ENCODE measurements at regions of chr6 and their contacts with region 1.

Region 1: GRCh38 chr6:46781478-46782378 is 11.5 kb upstream of the MEP1A start:
- DNase-seq: peak; percentile 34 to 58
- H3K4me3 ChIP-seq: no peak overlapping the region
- H3K27ac ChIP-seq: no peak overlapping the region
- H3K4me1 ChIP-seq: no peaks in the 10 kb centered on the region
- H3K27me3 ChIP-seq: no peaks in the 10 kb centered on the region
- CTCF ChIP-seq: peak; percentile 89

Region 2: GRCh38 chr6:45854149-45854742 is 927.5 kb before region 1 on chr6:
- CTCF ChIA-PET with region 1: no interaction called
- POLR2A ChIA-PET with region 1: no interaction called
- intact Hi-C with region 1: no loop called
- DNase-seq: no peak
- H3K4me3 ChIP-seq: no peak overlapping the region
- H3K27ac ChIP-seq: no peak overlapping the region
- H3K4me1 ChIP-seq: no peaks in the 10 kb centered on the region
- H3K27me3 ChIP-seq: no peaks in the 10 kb centered on the region
- CTCF ChIP-seq: no peak

Region 3: GRCh38 chr6:46410334-46410953 is 371.3 kb before region 1 on chr6:
- CTCF ChIA-PET with region 1: interaction called, 12 read pairs
- POLR2A ChIA-PET with region 1: no interaction called
- intact Hi-C with region 1: no loop called
- DNase-seq: peak in 1 of 2 experiments; percentile 23
- H3K4me3 ChIP-seq: no peak overlapping the region
- H3K27ac ChIP-seq: no peak overlapping the region
- H3K4me1 ChIP-seq: no peaks in the 10 kb centered on the region
- H3K27me3 ChIP-seq: no peaks in the 10 kb centered on the region
- CTCF ChIP-seq: peak; percentile 91

Region 4: DNA sequence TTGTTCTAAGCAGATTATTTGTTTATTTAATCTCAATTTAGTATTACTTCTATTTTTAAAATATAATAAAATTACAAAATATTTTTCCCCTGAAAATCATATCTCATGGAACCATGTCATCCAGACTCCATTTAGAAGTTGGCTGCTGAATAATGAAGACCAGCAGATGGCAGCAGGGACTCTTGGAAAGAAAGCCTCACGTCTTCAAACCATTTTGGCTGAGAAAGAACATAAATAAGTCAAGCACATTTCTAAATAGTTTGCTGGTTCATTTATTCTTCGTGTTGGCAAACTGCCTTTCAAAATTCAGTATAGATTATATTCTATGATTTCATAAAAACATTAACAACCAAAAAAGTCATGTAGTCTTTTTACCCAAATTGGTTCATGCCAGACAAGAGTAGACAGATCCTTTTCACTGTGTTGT is 362.1 kb before region 1 on chr6:
- CTCF ChIA-PET with region 1: no interaction called
- POLR2A ChIA-PET with region 1: no interaction called
- intact Hi-C with region 1: loop called (anchors 1 kb)
- DNase-seq: peak in 1 of 2 experiments; percentile 48
- H3K4me3 ChIP-seq: no peak overlapping the region
- H3K27ac ChIP-seq: no peak overlapping the region
- H3K4me1 ChIP-seq: peaks cover 11% of the 10 kb centered on the region; the same call in 1 of the 2 replicates
- H3K27me3 ChIP-seq: no peaks in the 10 kb centered on the region
- CTCF ChIP-seq: peak; percentile 83

Region 5: GRCh38 chr6:46626228-46626909 is 155.4 kb before region 1 on chr6:
- CTCF ChIA-PET with region 1: no interaction called
- POLR2A ChIA-PET with region 1: no interaction called
- intact Hi-C with region 1: loop called (anchors 1 kb)
- DNase-seq: peak in 1 of 2 experiments; percentile 61
- H3K4me3 ChIP-seq: no peak overlapping the region
- H3K27ac ChIP-seq: no peak overlapping the region
- H3K4me1 ChIP-seq: peaks cover 7% of the 10 kb centered on the region; the same call in 1 of the 2 replicates
- H3K27me3 ChIP-seq: no peaks in the 10 kb centered on the region
- CTCF ChIP-seq: peak; percentile 77

Region 6: GRCh38 chr6:46704562-46704961 is 77.2 kb before region 1 on chr6:
- CTCF ChIA-PET with region 1: interaction called, 3 read pairs
- POLR2A ChIA-PET with region 1: no interaction called
- intact Hi-C with region 1: loop called (anchors 5 kb)
- DNase-seq: peak in 1 of 2 experiments; percentile 49
- H3K4me3 ChIP-seq: no peak overlapping the region
- H3K27ac ChIP-seq: no peak overlapping the region
- H3K4me1 ChIP-seq: peaks cover 12% of the 10 kb centered on the region
- H3K27me3 ChIP-seq: no peaks in the 10 kb centered on the region
- CTCF ChIP-seq: peak; percentile 66

Region 7: GRCh38 chr6:47047479-47048407 is 266.0 kb after region 1 on chr6:
- CTCF ChIA-PET with region 1: no interaction called
- POLR2A ChIA-PET with region 1: no interaction called
- intact Hi-C with region 1: loop called (anchors 5 kb)
- DNase-seq: peak; percentile 72 to 99
- H3K4me3 ChIP-seq: no peak overlapping the region; the same call in 1 of the 2 replicates
- H3K27ac ChIP-seq: peak overlapping the region; percentile 98
- H3K4me1 ChIP-seq: peaks cover 60% of the 10 kb centered on the region
- H3K27me3 ChIP-seq: no peaks in the 10 kb centered on the region
- CTCF ChIP-seq: peak; percentile 80

Measured in PC-9 (cell line).